A673 (cell line): ENCODE measurements at regions of chr9 and their contacts with region 1.

Region 1: DNA sequence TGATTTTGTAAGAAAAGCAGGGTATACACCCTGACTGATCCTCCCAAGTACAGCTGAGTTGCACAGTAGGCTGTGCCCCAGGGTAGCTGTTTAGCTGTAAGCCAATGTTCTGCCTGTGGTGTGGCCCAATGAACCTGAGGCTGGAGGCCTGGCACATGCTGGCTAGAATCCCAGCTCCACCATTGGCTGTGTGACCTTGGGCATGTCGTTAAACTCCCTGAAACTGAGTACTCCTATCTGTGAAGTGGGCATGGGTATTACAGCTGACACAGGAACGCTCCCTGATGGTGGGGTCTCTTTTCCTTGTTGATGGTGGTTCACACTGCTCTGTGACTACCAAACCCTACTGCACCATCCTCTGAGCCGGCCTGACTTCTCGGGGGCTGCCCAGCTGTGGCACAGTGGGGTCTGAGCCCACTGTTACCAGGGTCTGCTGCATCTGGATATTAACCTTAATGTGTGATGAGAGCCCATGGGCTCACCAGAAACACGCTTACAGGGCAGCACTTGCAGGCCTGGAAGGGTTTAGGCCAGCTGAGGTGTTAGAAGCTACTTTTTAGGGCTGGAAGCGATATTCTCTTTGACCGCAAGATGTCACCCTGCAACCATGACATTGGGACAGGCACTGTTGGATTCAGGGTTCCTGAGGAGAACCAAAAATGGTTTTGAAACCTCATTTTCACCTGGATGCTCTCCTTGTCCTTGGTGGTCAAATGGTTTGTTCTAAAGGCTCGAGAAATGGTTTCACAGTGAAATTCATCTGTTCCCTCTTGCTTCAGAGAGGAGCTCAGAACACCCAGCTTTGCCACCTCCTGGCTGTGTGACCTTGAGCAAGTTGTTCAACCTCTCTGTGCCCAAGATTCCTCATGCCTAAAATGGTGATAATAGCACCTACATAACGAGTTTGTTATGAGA is 6.8 kb upstream of the GADD45G start:
- DNase-seq: peak; percentile 69
- H3K4me3 ChIP-seq: no peak overlapping the region
- H3K27ac ChIP-seq: no peak overlapping the region
- H3K4me1 ChIP-seq: no peaks in the 10 kb centered on the region
- H3K27me3 ChIP-seq: peaks cover 25% of the 10 kb centered on the region
- CTCF ChIP-seq: peak; percentile 77

Region 2: GRCh38 chr9:90102292-90102901 is 504.4 kb after region 1 on chr9:
- CTCF ChIA-PET with region 1: interaction called, 33 read pairs
- POLR2A ChIA-PET with region 1: no interaction called
- intact Hi-C with region 1: loop called (anchors 1 kb)
- DNase-seq: peak; percentile 81
- H3K4me3 ChIP-seq: no peak overlapping the region
- H3K27ac ChIP-seq: no peak overlapping the region
- H3K4me1 ChIP-seq: no peaks in the 10 kb centered on the region
- H3K27me3 ChIP-seq: no peaks in the 10 kb centered on the region
- CTCF ChIP-seq: peak; percentile 78

Region 3: GRCh38 chr9:90219548-90220118 is 621.7 kb after region 1 on chr9:
- CTCF ChIA-PET with region 1: no interaction called
- POLR2A ChIA-PET with region 1: no interaction called
- intact Hi-C with region 1: loop called (anchors 1 kb)
- DNase-seq: peak; percentile 34
- H3K4me3 ChIP-seq: no peak overlapping the region
- H3K27ac ChIP-seq: no peak overlapping the region
- H3K4me1 ChIP-seq: no peaks in the 10 kb centered on the region
- H3K27me3 ChIP-seq: no peaks in the 10 kb centered on the region
- CTCF ChIP-seq: peak; percentile 65

Region 4: DNA sequence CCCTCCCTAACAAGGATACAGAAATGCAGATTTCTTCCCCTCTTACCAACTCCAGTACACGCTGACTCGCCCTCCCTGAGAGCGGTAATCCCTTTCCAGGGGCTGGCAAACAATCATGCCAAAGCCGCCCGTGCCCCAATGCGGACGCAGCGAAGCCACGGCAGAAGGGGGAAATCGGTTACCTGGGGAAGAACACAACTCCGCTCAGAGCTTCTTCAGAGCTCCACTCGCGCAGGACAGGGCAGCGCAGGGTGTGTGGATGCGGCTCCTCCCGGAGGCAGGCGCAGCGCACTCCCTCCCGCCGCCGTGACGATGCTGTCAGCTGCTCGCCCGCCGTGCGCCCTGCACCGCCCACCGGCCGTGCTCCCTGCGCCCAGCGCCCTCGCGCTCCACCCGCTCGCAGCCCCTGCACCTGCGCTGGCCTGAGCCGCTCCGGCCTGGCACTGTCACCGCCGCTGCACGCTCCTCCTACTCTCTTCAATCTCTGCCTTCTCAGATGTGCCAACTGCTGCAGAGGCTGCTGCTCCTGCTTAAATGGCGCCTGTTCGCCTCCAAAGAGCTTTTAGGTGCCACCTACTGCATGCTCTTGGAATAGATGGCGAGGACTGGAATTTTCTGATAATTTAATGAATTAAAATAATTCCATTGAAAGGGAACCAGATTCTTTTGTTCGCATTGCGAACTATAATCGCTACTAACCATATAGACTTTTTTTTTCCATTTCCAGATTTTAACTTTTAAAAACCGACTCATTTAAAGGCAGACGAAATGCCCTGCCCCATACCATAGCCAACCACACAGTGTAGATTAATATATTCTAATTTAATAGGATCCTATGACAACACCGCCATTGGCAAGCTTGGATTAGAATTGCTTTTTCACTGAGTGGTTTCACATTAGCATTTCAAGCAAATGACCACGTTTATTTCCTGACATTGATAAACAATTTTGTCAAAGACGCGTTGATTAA is 1044.9 kb after region 1 on chr9 and contains the start of gene DIRAS2:
- CTCF ChIA-PET with region 1: interaction called, 3 read pairs
- POLR2A ChIA-PET with region 1: no interaction called
- intact Hi-C with region 1: loop called (anchors 10 kb)
- DNase-seq: peak; percentile 67
- H3K4me3 ChIP-seq: peak within 1 kb of the TSS; percentile 43
- H3K27ac ChIP-seq: no peak within 1 kb of the TSS
- H3K4me1 ChIP-seq: no peaks in the 10 kb centered on the region
- H3K27me3 ChIP-seq: peaks cover 32% of the 10 kb centered on the region
- CTCF ChIP-seq: peak; percentile 61
- total RNA-seq, gene DIRAS2: not detected in 2 replicates